Breast epithelium (tissue), 4 donors: ENCODE measurements at regions of chr16 and their contacts with region 1.

Region 1: GRCh38 chr16:81053761-81054160 is 18.1 kb downstream of the ATMIN start:
- DNase-seq: no peak
- H3K4me3 ChIP-seq: no peak overlapping the region
- H3K27ac ChIP-seq: no peak overlapping the region
- H3K4me1 ChIP-seq: no peaks in the 10 kb centered on the region
- H3K27me3 ChIP-seq: no peaks in the 10 kb centered on the region
- CTCF ChIP-seq: no peak
- POLR2A ChIP-seq: no peak

Region 2: DNA sequence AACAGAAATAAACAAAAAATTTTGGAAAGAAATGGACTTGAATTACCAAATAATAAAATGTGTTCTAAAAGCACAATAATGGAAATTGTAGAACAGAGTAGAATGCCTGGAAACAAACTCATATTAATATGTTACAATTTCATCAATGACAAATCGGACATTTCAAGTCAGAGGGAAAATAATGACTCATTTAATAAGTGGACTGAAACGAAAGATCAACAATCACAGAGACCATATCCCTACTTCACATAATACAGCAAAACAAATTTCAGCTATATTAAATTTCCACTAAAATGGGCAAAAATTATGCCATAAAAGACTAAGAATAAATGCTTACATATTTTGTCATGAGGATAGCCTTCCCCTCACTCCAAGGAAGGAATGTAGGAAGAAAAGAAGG is 275.1 kb before region 1 on chr16:
- intact Hi-C with region 1: no loop called
- DNase-seq: no peak
- H3K4me3 ChIP-seq: no peak overlapping the region
- H3K27ac ChIP-seq: no peak overlapping the region
- H3K4me1 ChIP-seq: no peaks in the 10 kb centered on the region
- H3K27me3 ChIP-seq: no peaks in the 10 kb centered on the region
- CTCF ChIP-seq: no peak
- POLR2A ChIP-seq: no peak

Region 3: DNA sequence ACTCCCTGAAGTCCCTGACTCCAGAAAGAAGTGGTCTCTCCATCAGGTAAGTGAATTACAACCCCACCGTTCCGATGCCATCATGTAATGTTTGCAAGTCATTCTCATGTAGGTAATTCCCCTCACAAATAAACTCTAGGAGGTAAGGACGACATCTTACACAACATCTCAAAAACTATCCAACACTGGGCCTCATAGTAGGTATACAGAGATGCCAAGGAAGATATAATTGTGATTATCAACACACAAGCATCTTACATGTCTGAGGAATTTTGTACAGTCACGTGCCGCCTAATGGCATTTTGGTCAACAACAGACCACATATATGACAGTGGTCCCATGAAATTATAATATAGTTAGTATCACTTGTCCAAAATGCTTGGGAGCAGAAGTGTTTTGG is 35.1 kb after region 1 on chr16:
- intact Hi-C with region 1: loop called (anchors 2 kb)
- DNase-seq: no peak
- H3K4me3 ChIP-seq: no peak overlapping the region
- H3K27ac ChIP-seq: no peak overlapping the region
- H3K4me1 ChIP-seq: no peaks in the 10 kb centered on the region
- H3K27me3 ChIP-seq: no peaks in the 10 kb centered on the region
- CTCF ChIP-seq: no peak
- POLR2A ChIP-seq: no peak

Region 4: GRCh38 chr16:81099958-81100357 is 46.2 kb after region 1 on chr16:
- intact Hi-C with region 1: no loop called
- DNase-seq: no peak
- H3K4me3 ChIP-seq: no peak overlapping the region
- H3K27ac ChIP-seq: no peak overlapping the region
- H3K4me1 ChIP-seq: no peaks in the 10 kb centered on the region
- H3K27me3 ChIP-seq: no peaks in the 10 kb centered on the region
- CTCF ChIP-seq: no peak
- POLR2A ChIP-seq: no peak